ENCODE measurements at regions of chr19 and their contacts with region 1.

Region 1: GRCh38 chr19:33734913-33735312 is 61.8 kb upstream of the KCTD15 start:
- DNase-seq: peak in 1 of 2 donors; percentile 53
- ATAC-seq: peak in 7 of 8 donors; percentile 39 to 74 (median 51)
- H3K4me3 ChIP-seq: no peak overlapping the region
- H3K27ac ChIP-seq: no peak overlapping the region
- H3K4me1 ChIP-seq: no peaks in the 10 kb centered on the region
- H3K27me3 ChIP-seq: peaks cover 0 to 35% (median 24%) of the 10 kb centered on the region in 7 donors
- CTCF ChIP-seq: no peak

Region 2: DNA sequence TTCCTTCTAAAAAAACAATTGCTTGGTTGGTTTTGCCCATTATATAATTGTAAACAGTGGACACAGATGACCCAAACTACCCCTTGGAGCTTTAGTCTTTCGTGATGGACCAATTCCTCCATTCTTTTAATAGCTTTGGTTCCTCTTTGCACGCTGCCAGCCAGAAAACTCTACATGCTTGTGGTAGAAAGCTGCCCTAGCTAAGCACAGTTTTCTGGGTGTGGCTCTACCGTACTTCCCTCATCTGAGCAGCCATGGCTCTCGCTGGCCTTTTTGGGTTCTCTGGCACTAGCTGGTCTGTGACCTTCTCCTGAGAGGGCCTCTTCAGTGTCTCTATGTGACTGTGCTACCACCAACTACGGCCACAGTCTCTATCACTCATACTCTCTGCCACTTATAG is 402.7 kb before region 1 on chr19:
- intact Hi-C with region 1: loop called in 1 of 10 experiments (anchors 5 kb)
- DNase-seq: no peak
- ATAC-seq: peak in 5 of 8 donors; percentile 42 to 64 (median 55)
- H3K4me3 ChIP-seq: no peak overlapping the region
- H3K27ac ChIP-seq: peak overlapping the region in 1 of 10 donors; percentile 10
- H3K4me1 ChIP-seq: peaks cover 0 to 27% (median 0%) of the 10 kb centered on the region in 9 donors
- H3K27me3 ChIP-seq: peaks cover 0 to 13% (median 7%) of the 10 kb centered on the region in 7 donors
- CTCF ChIP-seq: no peak